ENCODE measurements at regions of chr1 and their contacts with region 1.

Region 1: GRCh38 chr1:100387209-100387608 is 34.9 kb downstream of the CDC14A start:
- DNase-seq: no peak
- ATAC-seq: no peak
- H3K4me3 Mint-ChIP-seq: peak overlapping the region; percentile 66
- H3K27ac Mint-ChIP-seq: peak overlapping the region; percentile 78
- H3K4me1 Mint-ChIP-seq: peaks cover 68% of the 10 kb centered on the region
- H3K27me3 Mint-ChIP-seq: no peaks in the 10 kb centered on the region

Region 2: GRCh38 chr1:100358210-100358609 is 29.0 kb before region 1 on chr1:
- CTCF ChIA-PET with region 1: interaction called, 18 read pairs
- POLR2A ChIA-PET with region 1: interaction called, 15 read pairs
- DNase-seq: peak; percentile 37
- ATAC-seq: no peak
- H3K4me3 Mint-ChIP-seq: no peak overlapping the region
- H3K27ac Mint-ChIP-seq: no peak overlapping the region
- H3K4me1 Mint-ChIP-seq: peaks cover 69% of the 10 kb centered on the region
- H3K27me3 Mint-ChIP-seq: no peaks in the 10 kb centered on the region